Activated CD4-positive, alpha-beta memory T cell treated with anti-CD3 and anti-CD28 coated beads, Interleukin-2, amount 10 ng/mL, durations not matched to agents 7 days and 5 days (primary cell): ENCODE measurements at regions of chr6 and their contacts with region 1.

Region 1: GRCh38 chr6:166087852-166088251 is 79.8 kb downstream of the TBXT start:
- DNase-seq: no peak
- H3K4me3 Mint-ChIP-seq: no peak overlapping the region
- H3K27ac Mint-ChIP-seq: no peak overlapping the region
- H3K4me1 Mint-ChIP-seq: no peaks in the 10 kb centered on the region
- H3K27me3 Mint-ChIP-seq: no peaks in the 10 kb centered on the region

Region 2: DNA sequence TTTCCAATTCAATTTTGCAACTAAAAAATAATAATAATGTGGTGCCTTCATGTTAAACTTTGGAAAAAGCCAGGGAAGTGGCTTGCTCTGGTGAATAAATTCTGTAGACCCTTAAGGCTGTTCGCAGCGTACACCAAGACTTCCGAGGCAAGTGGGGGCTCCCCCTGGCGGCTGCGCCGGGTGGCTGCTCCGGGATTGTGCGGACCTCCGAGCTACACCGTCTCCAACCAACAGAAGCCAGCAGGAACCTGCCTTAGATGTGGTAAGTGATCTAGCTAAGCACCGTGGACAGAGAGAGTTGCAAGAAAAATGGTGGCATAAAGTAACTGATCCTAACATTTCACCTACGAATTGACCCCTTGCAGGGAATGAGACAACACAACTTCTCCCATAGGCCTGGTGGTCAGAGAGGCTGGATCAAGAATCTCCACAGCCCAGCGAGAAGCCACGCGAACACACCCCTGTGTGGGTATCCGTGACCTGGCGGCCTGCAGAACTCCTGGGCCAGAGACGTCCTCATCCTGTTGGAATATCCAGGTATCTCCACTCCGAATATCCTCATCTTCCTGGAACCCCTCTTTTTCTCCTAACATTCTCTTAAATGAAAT is 10.2 kb after region 1 on chr6:
- CTCF ChIA-PET with region 1: interaction called, 11 read pairs
- POLR2A ChIA-PET with region 1: no interaction called
- DNase-seq: peak; percentile 44
- H3K4me3 Mint-ChIP-seq: no peak overlapping the region
- H3K27ac Mint-ChIP-seq: no peak overlapping the region
- H3K4me1 Mint-ChIP-seq: no peaks in the 10 kb centered on the region
- H3K27me3 Mint-ChIP-seq: peaks cover 7% of the 10 kb centered on the region